ENCODE measurements at regions of chr1 and their contacts with region 1.

Region 1: GRCh38 chr1:72282271-72283021 is at the start of gene NEGR1:
- DNase-seq: peak; percentile 89
- ATAC-seq: peak; percentile 70
- H3K4me3 ChIP-seq: peak within 1 kb of the TSS; percentile 58
- H3K27ac ChIP-seq: peak within 1 kb of the TSS; percentile 87
- H3K4me1 ChIP-seq: peaks cover 2% of the 10 kb centered on the region; the same call in 1 of the 2 replicates
- H3K27me3 ChIP-seq: no peaks in the 10 kb centered on the region
- CTCF ChIP-seq: no peak; the same call in 1 of the 2 replicates
- POLR2A ChIP-seq: no peak
- RAD21 ChIP-seq: no peak; the same call in 1 of the 2 replicates
- total RNA-seq, gene NEGR1: 9.1 and 13.1 TPM in 2 replicates

Region 2: GRCh38 chr1:71093938-71094337 is 1188.5 kb before region 1 on chr1:
- CTCF ChIA-PET with region 1: no interaction called
- POLR2A ChIA-PET with region 1: no interaction called
- dilution Hi-C with region 1: no loop called
- in situ Hi-C with region 1: no loop called
- intact Hi-C with region 1: loop called (anchors 5 kb)
- DNase-seq: peak; percentile 45
- ATAC-seq: peak; percentile 41
- H3K4me3 ChIP-seq: no peak overlapping the region
- H3K27ac ChIP-seq: no peak overlapping the region
- H3K4me1 ChIP-seq: peaks cover 4% of the 10 kb centered on the region
- H3K27me3 ChIP-seq: no peaks in the 10 kb centered on the region
- CTCF ChIP-seq: peak; percentile 74
- POLR2A ChIP-seq: no peak
- RAD21 ChIP-seq: peak; percentile 72

Region 3: GRCh38 chr1:71587961-71588360 is 694.5 kb before region 1 on chr1:
- CTCF ChIA-PET with region 1: no interaction called
- POLR2A ChIA-PET with region 1: no interaction called
- dilution Hi-C with region 1: no loop called
- in situ Hi-C with region 1: no loop called
- intact Hi-C with region 1: loop called (anchors 2 kb)
- DNase-seq: peak; percentile 47
- ATAC-seq: 0 out of 2 replicates have a peak, but pooled peaks have one; percentile 46
- H3K4me3 ChIP-seq: no peak overlapping the region
- H3K27ac ChIP-seq: no peak overlapping the region
- H3K4me1 ChIP-seq: no peaks in the 10 kb centered on the region
- H3K27me3 ChIP-seq: no peaks in the 10 kb centered on the region
- CTCF ChIP-seq: peak; percentile 58
- POLR2A ChIP-seq: no peak
- RAD21 ChIP-seq: peak; percentile 61

Region 4: GRCh38 chr1:72186733-72187307 is 95.6 kb before region 1 on chr1:
- CTCF ChIA-PET with region 1: interaction called, 5 read pairs
- POLR2A ChIA-PET with region 1: no interaction called
- dilution Hi-C with region 1: no loop called
- in situ Hi-C with region 1: no loop called
- intact Hi-C with region 1: loop called (anchors 2 kb)
- DNase-seq: peak; percentile 38
- ATAC-seq: peak; percentile 60
- H3K4me3 ChIP-seq: no peak overlapping the region
- H3K27ac ChIP-seq: no peak overlapping the region
- H3K4me1 ChIP-seq: peaks cover 6% of the 10 kb centered on the region
- H3K27me3 ChIP-seq: no peaks in the 10 kb centered on the region
- CTCF ChIP-seq: peak; percentile 63
- POLR2A ChIP-seq: no peak
- RAD21 ChIP-seq: peak; percentile 74

Region 5: GRCh38 chr1:72623299-72623708 is 340.9 kb after region 1 on chr1:
- CTCF ChIA-PET with region 1: no interaction called
- POLR2A ChIA-PET with region 1: no interaction called
- dilution Hi-C with region 1: no loop called
- in situ Hi-C with region 1: no loop called
- intact Hi-C with region 1: loop called (anchors 2 kb)
- DNase-seq: peak; percentile 31
- ATAC-seq: peak; percentile 81
- H3K4me3 ChIP-seq: no peak overlapping the region
- H3K27ac ChIP-seq: no peak overlapping the region
- H3K4me1 ChIP-seq: no peaks in the 10 kb centered on the region
- H3K27me3 ChIP-seq: no peaks in the 10 kb centered on the region
- CTCF ChIP-seq: peak; percentile 50
- POLR2A ChIP-seq: no peak
- RAD21 ChIP-seq: peak; percentile 45